HEK293 (cell line): ENCODE measurements at regions of chr6 and their contacts with region 1.

Region 1: DNA sequence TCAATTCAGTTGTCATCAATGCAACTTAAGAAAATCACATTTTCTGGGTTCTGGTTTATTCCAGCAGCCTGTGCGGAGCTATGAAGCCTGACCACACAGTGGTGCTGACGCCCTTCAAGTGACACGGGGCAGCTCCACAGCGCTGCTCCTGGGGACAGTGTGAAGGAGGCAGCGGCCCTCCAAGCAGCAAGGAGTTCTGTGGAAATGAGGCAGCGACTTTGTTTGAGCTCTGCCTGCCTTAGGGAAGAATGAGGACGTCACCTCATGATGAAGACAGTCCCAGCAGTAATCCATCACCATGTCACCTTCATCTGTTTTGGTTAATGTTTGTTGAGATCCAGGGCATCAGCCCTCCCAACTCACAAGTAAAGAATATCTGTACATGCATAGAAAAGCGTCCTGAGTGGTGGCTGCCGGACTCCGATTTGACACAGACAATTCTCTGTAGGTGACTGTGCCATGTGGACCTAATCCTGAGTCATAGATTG is 168.5 kb upstream of the UST start:
- H3K4me3 ChIP-seq: no peak overlapping the region
- H3K27ac ChIP-seq: no peak overlapping the region
- H3K4me1 ChIP-seq: no peaks in the 10 kb centered on the region
- CTCF ChIP-seq: peak; percentile 99

Region 2: GRCh38 chr6:148593130-148593812 is 15.0 kb after region 1 on chr6:
- CTCF ChIA-PET with region 1: interaction called, 19 read pairs
- POLR2A ChIA-PET with region 1: interaction called, 3 read pairs
- H3K4me3 ChIP-seq: no peak overlapping the region
- H3K27ac ChIP-seq: no peak overlapping the region
- H3K4me1 ChIP-seq: no peaks in the 10 kb centered on the region
- CTCF ChIP-seq: no peak

Region 3: GRCh38 chr6:148677594-148678476 is 99.5 kb after region 1 on chr6:
- CTCF ChIA-PET with region 1: no interaction called
- POLR2A ChIA-PET with region 1: no interaction called
- H3K4me3 ChIP-seq: no peak overlapping the region
- H3K27ac ChIP-seq: no peak overlapping the region
- H3K4me1 ChIP-seq: no peaks in the 10 kb centered on the region
- CTCF ChIP-seq: no peak

Region 4: GRCh38 chr6:148934539-148934938 is 356.2 kb after region 1 on chr6:
- CTCF ChIA-PET with region 1: interaction called, 11 read pairs
- POLR2A ChIA-PET with region 1: no interaction called
- H3K4me3 ChIP-seq: no peak overlapping the region
- H3K27ac ChIP-seq: no peak overlapping the region
- H3K4me1 ChIP-seq: no peaks in the 10 kb centered on the region; the same call in 1 of the 2 replicates
- CTCF ChIP-seq: no peak

Region 5: DNA sequence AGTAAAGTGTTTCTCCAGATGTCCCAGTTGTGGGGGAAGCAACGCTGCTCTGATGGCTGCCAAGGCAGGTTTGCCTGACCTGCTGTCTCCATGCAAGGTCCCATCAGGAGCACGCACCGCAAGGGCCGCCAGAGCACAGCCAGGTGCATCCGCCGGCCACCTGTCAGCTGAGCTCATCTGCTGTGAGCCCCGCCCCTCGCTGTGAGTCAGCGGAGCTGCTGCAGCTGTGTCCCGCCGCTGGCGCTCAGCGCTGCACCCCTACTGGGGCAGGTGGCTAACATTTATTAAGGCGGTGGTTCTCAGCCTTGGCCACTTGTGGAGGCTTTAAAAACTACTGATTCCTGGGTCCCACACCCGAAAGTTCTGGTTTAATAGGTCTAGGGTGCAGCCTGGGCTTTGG is 394.2 kb after region 1 on chr6:
- CTCF ChIA-PET with region 1: interaction called, 17 read pairs
- POLR2A ChIA-PET with region 1: no interaction called
- H3K4me3 ChIP-seq: no peak overlapping the region
- H3K27ac ChIP-seq: no peak overlapping the region
- H3K4me1 ChIP-seq: peaks cover 12% of the 10 kb centered on the region
- CTCF ChIP-seq: peak; percentile 30; the same call in 1 of the 2 replicates

Region 6: DNA sequence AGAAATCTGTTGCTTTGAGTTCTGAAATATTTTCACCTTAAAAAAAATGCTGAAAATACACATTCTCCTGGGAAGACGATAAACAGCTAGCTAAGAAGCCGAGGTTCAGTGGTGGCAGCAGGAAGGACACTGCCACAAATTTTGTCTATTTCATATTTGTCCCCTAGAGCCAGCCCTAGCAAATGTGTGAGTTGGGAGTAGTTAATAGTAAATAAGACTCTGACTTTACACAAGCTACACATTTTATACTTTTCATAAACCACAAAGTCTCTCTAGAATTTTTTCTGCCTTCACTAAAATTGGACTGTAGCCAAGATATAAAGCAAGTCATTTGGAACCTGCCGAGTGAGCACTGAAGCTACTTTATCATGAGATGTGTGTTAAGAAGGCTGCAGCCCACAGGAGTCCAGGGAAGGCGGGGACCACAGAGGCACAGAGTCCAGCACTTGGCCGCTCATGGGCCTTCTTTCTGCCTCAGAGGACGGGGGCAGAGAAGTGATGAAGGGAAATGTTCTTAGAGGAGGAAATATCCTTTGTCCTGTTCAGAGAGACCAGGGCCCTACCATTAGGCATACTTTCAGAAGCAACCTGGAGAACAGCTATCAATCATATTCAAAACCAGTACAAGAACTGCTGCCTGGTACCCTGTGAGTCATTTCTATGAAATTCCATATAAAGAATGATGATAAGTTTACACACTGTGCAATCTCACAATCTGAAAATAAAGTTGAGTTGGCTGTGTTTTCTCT is 497.5 kb after region 1 on chr6:
- CTCF ChIA-PET with region 1: interaction called, 13 read pairs
- POLR2A ChIA-PET with region 1: no interaction called
- H3K4me3 ChIP-seq: no peak overlapping the region
- H3K27ac ChIP-seq: peak overlapping the region; percentile 28
- H3K4me1 ChIP-seq: peaks cover 32% of the 10 kb centered on the region
- CTCF ChIP-seq: no peak